Motor neuron (in vitro differentiated cells): ENCODE measurements at regions of chr16 and their contacts with region 1.

Region 1: GRCh38 chr16:73058221-73058615 is 10.3 kb upstream of the ZFHX3 start:
- ATAC-seq: peak in 7 of 8 experiments; percentile 1 to 52 (median 15)
- H3K4me3 ChIP-seq: peak overlapping the region; percentile 56 to 95 (median 86)
- H3K27ac ChIP-seq: peak overlapping the region; percentile 91 to 94
- H3K4me1 ChIP-seq: peaks cover 16 to 46% of the 10 kb centered on the region in 2 donors

Region 2: GRCh38 chr16:73527182-73527581 is 469.0 kb after region 1 on chr16:
- in situ Hi-C with region 1: loop called in 1 of 9 experiments (anchors 25 kb)
- ATAC-seq: no peak
- H3K4me3 ChIP-seq: no peak overlapping the region
- H3K27ac ChIP-seq: peak overlapping the region in 1 of 2 donors; percentile 36
- H3K4me1 ChIP-seq: peaks cover 37 to 60% of the 10 kb centered on the region in 2 donors